PC-3 (cell line): ENCODE measurements at regions of chr16 and their contacts with region 1.

Region 1: DNA sequence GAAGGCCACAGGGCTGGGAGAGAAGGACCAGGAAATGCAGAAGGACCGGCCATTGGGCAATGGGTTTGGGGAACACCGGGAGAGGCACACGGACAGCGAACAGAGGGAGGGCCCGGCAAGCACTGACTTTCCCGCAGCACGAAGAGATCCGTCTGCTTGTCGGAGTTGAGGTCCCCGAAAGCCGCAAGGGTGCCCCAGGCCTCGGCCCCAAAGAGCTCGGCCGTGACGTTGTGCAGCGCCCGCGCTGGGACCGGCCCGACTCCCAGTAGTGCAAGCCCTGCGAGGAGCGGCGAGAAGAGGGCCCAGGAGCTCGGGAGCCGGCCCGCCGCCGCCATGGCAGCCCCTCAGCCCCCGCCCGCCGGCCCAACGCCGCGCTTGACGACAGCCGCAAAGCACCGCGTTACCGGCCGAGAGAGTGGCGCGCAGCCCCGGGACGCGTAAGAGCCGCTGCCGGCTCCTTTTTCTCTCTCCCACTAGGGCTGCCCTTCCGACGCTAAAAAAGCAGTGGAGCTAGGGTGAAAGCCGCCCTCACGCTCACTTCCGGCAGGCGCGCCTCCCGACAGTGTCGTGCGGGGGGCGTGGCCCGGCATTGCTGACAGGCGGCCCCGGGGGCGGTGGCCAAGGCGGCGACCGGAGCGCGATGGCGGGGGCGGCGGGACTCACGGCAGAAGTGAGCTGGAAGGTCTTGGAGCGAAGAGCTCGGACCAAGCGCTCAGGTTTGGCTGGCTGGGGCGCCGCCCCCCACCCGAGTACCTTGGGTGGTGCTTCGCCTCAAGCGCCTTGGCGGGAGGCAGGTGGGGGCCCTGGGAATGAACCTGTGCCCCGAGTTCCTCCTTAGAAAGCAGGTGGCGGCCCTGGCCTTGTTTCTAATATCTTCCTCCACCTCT is at the starts of genes ITFG1 and PHKB:
- DNase-seq: peak; percentile 85
- ATAC-seq: peak; percentile 78
- H3K4me3 ChIP-seq: peak within 1 kb of the TSS; percentile 91
- H3K27ac ChIP-seq: peak within 1 kb of the TSS; percentile 94
- H3K4me1 ChIP-seq: peaks cover 21% of the 10 kb centered on the region
- H3K27me3 ChIP-seq: no peaks in the 10 kb centered on the region
- CTCF ChIP-seq: no peak
- total RNA-seq, gene ITFG1: 20.0 and 26.5 TPM in 2 replicates
- total RNA-seq, gene PHKB: 31.8 and 42.0 TPM in 2 replicates

Region 2: GRCh38 chr16:47258874-47259461 is 202.0 kb before region 1 on chr16:
- CTCF ChIA-PET with region 1: no interaction called
- POLR2A ChIA-PET with region 1: interaction called, 13 read pairs
- intact Hi-C with region 1: no loop called
- DNase-seq: peak; percentile 46
- ATAC-seq: no peak; the same call in 1 of the 2 replicates
- H3K4me3 ChIP-seq: no peak overlapping the region
- H3K27ac ChIP-seq: no peak overlapping the region
- H3K4me1 ChIP-seq: no peaks in the 10 kb centered on the region
- H3K27me3 ChIP-seq: no peaks in the 10 kb centered on the region
- CTCF ChIP-seq: peak; percentile 65

Region 3: GRCh38 chr16:47387026-47387734 is 73.8 kb before region 1 on chr16:
- CTCF ChIA-PET with region 1: no interaction called
- POLR2A ChIA-PET with region 1: no interaction called
- intact Hi-C with region 1: no loop called
- DNase-seq: no peak
- ATAC-seq: no peak
- H3K4me3 ChIP-seq: no peak overlapping the region
- H3K27ac ChIP-seq: no peak overlapping the region
- H3K4me1 ChIP-seq: peaks cover 6% of the 10 kb centered on the region
- H3K27me3 ChIP-seq: no peaks in the 10 kb centered on the region
- CTCF ChIP-seq: no peak

Region 4: DNA sequence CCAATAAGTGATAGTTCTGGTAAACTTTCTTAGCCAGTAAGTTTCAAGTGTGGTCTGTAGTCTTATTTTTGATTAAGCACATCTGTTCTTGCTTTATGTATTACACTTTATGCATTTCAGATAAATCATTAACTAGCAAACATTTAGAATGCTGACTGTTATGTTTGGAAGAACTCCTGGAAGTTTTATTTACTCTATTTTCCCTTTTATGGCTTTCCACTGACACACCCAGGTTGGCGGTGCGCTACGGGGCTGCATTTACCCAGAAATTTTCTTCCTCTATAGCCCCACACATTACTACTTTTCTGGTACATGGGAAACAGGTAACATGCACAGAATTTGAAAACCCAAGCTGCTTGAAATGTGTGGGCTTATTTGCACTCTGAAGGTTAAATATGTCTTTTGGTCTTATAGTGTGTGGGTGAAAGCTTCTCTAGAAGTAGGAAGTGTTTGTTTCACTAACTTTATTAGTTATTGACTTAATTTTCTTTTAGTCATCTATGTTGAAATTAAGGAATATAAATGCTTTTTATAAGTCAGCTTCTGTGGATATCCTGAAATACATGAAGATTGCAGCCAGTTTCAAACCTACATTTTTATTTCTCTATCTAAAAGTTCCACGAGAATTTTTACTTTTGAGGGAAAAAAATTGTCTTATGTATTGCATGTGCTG is 203.8 kb after region 1 on chr16:
- CTCF ChIA-PET with region 1: no interaction called
- POLR2A ChIA-PET with region 1: no interaction called
- intact Hi-C with region 1: loop called (anchors 10 kb)
- DNase-seq: peak; percentile 50
- ATAC-seq: peak; percentile 92
- H3K4me3 ChIP-seq: peak overlapping the region; percentile 23; the same call in 1 of the 2 replicates
- H3K27ac ChIP-seq: peak overlapping the region; percentile 39
- H3K4me1 ChIP-seq: peaks cover 18% of the 10 kb centered on the region
- H3K27me3 ChIP-seq: no peaks in the 10 kb centered on the region
- CTCF ChIP-seq: no peak